ENCODE measurements at regions of chr3 and their contacts with region 1.

Region 1: DNA sequence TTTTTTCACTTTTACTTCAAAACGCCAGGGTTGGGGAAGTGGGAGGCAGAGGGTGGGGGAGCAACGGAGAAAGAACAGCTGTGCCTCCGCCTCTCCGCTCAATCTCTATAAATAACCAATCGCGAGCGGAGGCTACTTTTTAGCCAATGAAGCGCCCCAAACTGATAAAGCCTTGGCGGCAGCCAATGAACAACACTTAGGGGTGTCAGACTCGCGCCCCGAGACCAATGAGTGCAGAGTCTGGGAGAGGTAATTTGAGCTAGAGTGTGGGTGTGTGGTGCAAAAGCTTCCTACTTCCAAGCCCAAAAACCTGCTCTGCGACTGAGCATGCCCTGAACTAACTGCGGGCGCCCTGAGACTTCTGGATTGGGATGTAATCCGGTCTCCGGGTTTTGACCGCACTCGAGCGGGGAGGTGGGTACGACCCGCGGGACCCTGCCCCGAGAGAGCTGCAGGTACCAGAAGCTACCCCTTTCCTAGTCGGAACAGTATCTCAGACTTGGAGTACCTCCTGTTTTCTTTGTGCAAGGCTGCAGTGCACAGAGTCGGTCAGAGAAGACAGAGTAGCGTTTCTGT is 800 bp upstream of the RAP2B start:
- DNase-seq: peak; percentile 96
- H3K4me3 Mint-ChIP-seq: peak overlapping the region; percentile 98
- H3K27ac Mint-ChIP-seq: peak overlapping the region; percentile 96
- H3K4me1 Mint-ChIP-seq: peaks cover 27% of the 10 kb centered on the region
- H3K27me3 Mint-ChIP-seq: no peaks in the 10 kb centered on the region

Region 2: GRCh38 chr3:152205097-152205593 is 956.1 kb before region 1 on chr3:
- CTCF ChIA-PET with region 1: no interaction called
- intact Hi-C with region 1: loop called (anchors 5 kb)
- DNase-seq: no peak
- H3K4me3 Mint-ChIP-seq: peak overlapping the region; percentile 89
- H3K27ac Mint-ChIP-seq: peak overlapping the region; percentile 99
- H3K4me1 Mint-ChIP-seq: peaks cover 67% of the 10 kb centered on the region
- H3K27me3 Mint-ChIP-seq: no peaks in the 10 kb centered on the region

Region 3: GRCh38 chr3:153026026-153026425 is 135.2 kb before region 1 on chr3:
- CTCF ChIA-PET with region 1: no interaction called
- intact Hi-C with region 1: no loop called
- DNase-seq: no peak
- H3K4me3 Mint-ChIP-seq: no peak overlapping the region
- H3K27ac Mint-ChIP-seq: no peak overlapping the region
- H3K4me1 Mint-ChIP-seq: no peaks in the 10 kb centered on the region
- H3K27me3 Mint-ChIP-seq: peaks cover 3% of the 10 kb centered on the region

Region 4: GRCh38 chr3:153090973-153091372 is 70.3 kb before region 1 on chr3:
- CTCF ChIA-PET with region 1: no interaction called
- intact Hi-C with region 1: loop called (anchors 1 kb)
- DNase-seq: no peak
- H3K4me3 Mint-ChIP-seq: no peak overlapping the region
- H3K27ac Mint-ChIP-seq: no peak overlapping the region
- H3K4me1 Mint-ChIP-seq: peaks cover 22% of the 10 kb centered on the region
- H3K27me3 Mint-ChIP-seq: no peaks in the 10 kb centered on the region

Region 5: DNA sequence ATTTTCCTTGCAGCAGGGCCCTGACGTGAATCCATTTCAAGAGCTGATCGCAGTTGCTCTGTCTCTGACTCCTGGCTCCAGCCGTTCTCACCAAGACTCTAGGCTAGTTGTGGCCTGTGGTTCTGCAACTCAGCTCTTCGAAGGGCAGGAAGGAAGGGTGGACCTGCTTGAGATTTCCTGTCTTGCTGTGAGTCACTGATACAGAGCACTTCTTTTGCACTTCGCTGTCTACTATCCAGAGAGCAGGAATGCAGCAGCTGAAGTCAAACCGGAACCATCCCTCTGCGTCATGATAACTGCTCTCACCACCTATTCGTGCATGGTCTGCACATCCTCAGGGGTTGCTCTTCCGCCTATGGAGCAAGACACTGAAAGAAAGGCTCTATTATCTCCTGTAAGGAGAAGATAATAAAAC is 60.5 kb after region 1 on chr3:
- CTCF ChIA-PET with region 1: interaction called, 4 read pairs
- intact Hi-C with region 1: loop called (anchors 1 kb)
- DNase-seq: peak; percentile 73
- H3K4me3 Mint-ChIP-seq: peak overlapping the region; percentile 66
- H3K27ac Mint-ChIP-seq: peak overlapping the region; percentile 85
- H3K4me1 Mint-ChIP-seq: peaks cover 53% of the 10 kb centered on the region
- H3K27me3 Mint-ChIP-seq: no peaks in the 10 kb centered on the region

Region 6: GRCh38 chr3:153443961-153444360 is 282.7 kb after region 1 on chr3:
- CTCF ChIA-PET with region 1: no interaction called
- intact Hi-C with region 1: loop called (anchors 5 kb)
- DNase-seq: no peak
- H3K4me3 Mint-ChIP-seq: no peak overlapping the region
- H3K27ac Mint-ChIP-seq: no peak overlapping the region
- H3K4me1 Mint-ChIP-seq: peaks cover 16% of the 10 kb centered on the region
- H3K27me3 Mint-ChIP-seq: no peaks in the 10 kb centered on the region

Region 7: DNA sequence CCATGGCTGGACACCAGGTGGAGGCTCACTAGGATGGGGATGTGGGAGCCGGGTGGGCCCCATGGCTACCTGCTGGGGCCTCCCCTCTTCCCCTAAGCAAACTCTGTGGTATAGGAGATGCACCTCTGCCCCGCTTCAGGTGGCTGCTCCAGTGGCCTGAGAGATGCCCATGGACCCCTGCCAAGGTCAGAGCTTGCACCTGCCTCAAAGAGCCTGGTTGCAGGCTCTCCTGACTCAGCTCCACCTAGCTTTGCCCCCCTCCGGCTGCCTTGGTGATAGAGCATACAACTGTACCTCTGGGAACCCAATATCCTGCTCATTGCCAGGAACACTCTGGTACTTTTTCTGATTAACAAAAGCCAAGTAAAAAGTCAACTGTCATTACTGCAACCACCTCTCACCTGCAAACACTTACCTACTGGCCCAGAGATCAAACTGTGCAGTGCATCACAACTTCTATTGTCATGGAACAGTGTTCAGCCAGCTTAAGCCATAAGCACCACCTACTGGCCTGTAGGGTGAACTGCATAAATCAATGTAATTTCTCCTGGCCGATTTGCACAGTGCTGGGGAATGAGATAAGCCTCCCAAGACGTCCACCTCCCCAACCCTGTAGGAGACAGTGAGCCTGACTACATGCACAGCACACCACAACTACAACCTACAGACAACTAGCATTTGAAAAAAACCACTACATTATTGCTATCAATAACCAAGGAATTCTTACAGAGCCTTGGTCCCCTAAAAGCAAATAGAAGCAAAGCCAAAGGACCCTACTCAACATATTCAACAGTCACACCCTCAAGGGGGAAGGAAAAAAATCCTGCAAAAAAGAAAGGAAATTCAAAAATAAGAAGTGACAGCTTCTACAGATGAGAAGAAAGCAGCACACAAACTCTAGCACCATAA is 607.6 kb after region 1 on chr3:
- CTCF ChIA-PET with region 1: no interaction called
- intact Hi-C with region 1: loop called (anchors 2 kb)
- DNase-seq: peak; percentile 63
- H3K4me3 Mint-ChIP-seq: no peak overlapping the region
- H3K27ac Mint-ChIP-seq: no peak overlapping the region
- H3K4me1 Mint-ChIP-seq: peaks cover 1% of the 10 kb centered on the region
- H3K27me3 Mint-ChIP-seq: peaks cover 8% of the 10 kb centered on the region